ENCODE measurements at regions of chr6 and their contacts with region 1.

Region 1: DNA sequence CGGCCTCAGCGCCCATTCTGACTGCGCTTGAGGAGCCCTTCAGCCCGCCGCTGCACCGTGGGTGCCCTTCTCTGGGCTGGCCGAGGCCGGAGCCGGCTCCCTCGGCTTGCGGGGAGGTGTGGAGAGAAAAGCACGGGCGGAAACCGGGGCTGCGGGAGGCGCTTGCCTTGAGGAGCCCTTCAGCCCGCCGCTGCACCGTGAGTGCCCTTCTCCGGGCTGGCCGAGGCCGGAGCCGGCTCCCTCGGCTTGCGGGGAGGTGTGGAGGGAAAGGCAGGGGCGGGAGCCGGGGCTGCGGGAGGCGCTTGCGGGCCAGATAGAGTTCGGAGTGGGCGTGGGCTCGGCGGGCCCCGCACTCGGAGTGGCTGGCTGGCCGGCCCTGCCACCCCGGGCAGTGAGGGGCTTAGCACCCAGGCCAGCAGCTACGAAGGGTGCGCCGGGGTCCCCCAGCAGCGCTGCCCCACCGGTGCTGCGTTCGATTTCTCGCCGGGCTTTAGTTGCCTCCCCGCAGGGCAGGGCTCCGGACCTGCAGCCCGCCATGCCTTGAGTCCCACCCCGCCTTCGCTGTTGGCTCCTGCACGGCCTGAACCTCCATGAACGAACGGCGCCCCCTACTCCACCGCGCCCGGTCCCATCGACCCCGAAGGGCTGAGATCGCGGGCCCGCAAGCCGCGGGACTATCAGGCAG is 45.7 kb upstream of the MCUR1 start:
- DNase-seq: peak; percentile 63
- ATAC-seq: peak; percentile 93
- H3K4me3 Mint-ChIP-seq: peak overlapping the region; percentile 70
- H3K27ac Mint-ChIP-seq: no peak overlapping the region
- H3K4me1 Mint-ChIP-seq: no peaks in the 10 kb centered on the region; the same call in 1 of the 2 replicates
- H3K27me3 Mint-ChIP-seq: peaks cover 26% of the 10 kb centered on the region
- CTCF ChIP-seq: no peak

Region 2: DNA sequence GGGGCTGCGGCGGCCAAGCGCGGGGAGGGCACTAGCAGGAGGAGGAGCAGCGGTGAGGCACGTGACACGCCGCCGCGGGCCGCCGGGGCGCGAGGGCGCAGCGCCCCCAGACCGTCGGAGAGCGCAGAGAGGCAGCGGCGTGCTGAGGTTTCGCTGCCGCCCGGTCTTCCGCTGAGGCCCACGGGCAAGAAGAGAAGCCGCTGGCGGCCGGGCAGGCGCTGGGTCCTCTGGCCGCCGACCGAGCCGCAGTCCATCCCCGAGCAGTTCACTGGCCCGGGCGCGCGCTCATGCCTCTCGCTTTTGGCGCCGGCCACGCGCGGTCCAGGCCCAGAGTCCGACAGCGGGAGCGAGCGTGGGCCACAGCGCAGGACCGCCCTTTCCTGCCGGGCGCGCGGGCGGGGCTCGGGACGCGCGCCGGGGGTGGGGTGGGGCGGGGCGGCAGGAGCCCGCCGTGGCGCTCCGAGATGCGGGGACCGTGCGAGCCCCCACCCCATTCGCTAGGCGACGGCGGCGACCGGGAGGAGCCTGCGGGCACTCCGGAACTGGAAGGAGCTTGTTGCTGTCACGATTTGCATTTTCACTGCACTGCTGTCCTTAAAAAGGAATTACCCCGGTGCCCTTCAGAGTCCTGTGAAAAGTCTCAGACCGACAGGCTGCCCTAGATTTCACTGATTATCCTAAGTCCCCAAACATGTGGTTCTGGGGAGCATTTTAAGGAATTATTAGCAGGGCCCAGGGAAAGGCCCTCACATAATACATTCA is 45.7 kb before region 1 on chr6 and contains the start of gene MCUR1:
- CTCF ChIA-PET with region 1: interaction called, 6 read pairs
- POLR2A ChIA-PET with region 1: interaction called, 15 read pairs
- DNase-seq: peak; percentile 79
- ATAC-seq: peak; percentile 81
- H3K4me3 Mint-ChIP-seq: peak within 1 kb of the TSS; percentile 85
- H3K27ac Mint-ChIP-seq: peak within 1 kb of the TSS; percentile 91
- H3K4me1 Mint-ChIP-seq: peaks cover 25% of the 10 kb centered on the region
- H3K27me3 Mint-ChIP-seq: no peaks in the 10 kb centered on the region
- CTCF ChIP-seq: no peak
- total RNA-seq, gene MCUR1: 28.1 to 31.6 TPM (median 30.4 TPM) in 3 replicates